Vagina (tissue), 2 donors: ENCODE measurements at regions of chr10 and their contacts with region 1.

Region 1: GRCh38 chr10:77173615-77174461 is 463.8 kb downstream of the KCNMA1 start:
- DNase-seq: no peak
- H3K4me3 ChIP-seq: no peak overlapping the region
- H3K27ac ChIP-seq: no peak overlapping the region
- H3K4me1 ChIP-seq: peaks cover 10% of the 10 kb centered on the region
- H3K27me3 ChIP-seq: no peaks in the 10 kb centered on the region
- CTCF ChIP-seq: peak; percentile 83 to 95 (median 91)
- POLR2A ChIP-seq: no peak

Region 2: DNA sequence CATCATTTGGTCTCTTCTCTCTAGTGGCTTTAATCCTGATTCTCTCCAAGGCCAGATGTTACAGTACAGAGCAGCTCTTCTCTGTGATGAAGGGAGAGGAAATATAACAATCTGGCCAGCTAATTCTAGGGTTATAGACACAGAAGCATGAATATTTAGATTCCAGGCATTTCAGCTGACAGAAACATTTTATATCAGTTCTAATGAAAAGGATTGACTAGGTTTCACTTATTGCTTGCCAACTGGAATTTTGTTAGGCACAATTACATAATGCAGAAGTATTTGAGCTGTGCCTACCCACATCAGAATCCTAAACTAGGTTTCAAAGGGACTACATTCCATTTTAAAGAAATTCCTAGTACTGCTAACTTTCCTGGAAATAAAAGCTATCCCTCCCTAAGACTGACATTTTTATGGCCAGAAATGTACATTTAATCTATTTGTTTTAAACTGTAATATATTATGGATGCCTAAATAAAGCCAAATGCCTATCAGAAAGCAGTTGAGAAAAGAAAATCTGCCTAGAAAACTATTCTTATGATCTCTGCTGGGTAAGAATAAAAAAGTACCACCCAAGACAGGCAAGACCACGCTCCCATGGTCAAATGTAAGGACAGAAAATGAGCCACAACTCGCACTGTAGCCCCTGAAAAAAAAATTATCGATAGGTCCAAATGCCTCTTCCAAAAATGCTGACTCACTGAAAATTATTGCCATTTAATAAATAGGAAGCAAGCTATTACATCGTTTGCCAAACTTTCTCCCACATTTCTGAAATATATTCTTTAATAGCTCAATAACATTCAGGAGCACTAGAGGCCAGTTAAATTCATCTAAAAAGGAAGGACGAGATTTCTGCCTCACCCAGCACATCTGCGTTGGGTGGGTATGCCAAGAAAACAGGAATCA is 34.3 kb before region 1 on chr10:
- intact Hi-C with region 1: no loop called
- DNase-seq: no peak
- H3K4me3 ChIP-seq: no peak overlapping the region
- H3K27ac ChIP-seq: no peak overlapping the region
- H3K4me1 ChIP-seq: no peaks in the 10 kb centered on the region
- H3K27me3 ChIP-seq: no peaks in the 10 kb centered on the region
- CTCF ChIP-seq: no peak
- POLR2A ChIP-seq: no peak

Region 3: DNA sequence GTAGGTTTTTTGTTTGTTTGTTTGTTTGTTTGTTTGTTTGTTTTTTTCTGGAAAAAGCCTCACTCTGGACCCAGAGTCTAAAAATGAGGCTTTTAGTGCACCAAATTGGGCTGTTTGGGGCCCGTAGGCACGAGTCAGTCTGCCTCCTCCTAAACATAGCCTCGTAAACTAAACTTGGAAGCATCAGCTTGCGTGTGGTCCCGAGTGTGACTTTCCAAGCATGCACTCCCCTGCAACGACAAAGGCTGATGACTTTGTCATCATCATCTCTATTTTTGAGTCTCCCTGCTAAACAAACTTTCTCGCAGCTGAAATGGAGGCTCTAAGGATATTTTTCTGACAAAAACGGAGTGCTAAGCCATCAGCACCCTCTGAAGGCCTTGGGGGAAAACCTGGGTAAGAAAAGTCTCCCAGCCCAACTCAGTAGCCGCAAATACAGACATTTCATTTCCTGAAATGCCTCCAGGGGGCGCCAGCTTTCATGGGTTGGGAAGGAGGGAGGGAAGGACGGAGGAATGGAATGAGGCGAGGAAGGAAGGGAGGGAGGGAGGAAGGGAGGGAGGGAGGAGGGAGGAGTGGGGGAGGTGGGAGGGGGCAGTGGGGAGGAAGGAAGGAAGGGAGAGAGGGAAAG is 217.9 kb after region 1 on chr10:
- intact Hi-C with region 1: loop called (anchors 10 kb)
- DNase-seq: no peak
- H3K4me3 ChIP-seq: no peak overlapping the region
- H3K27ac ChIP-seq: peak overlapping the region; percentile 71
- H3K4me1 ChIP-seq: peaks cover 42% of the 10 kb centered on the region
- H3K27me3 ChIP-seq: no peaks in the 10 kb centered on the region
- CTCF ChIP-seq: peak; percentile 26 to 54 (median 34)
- POLR2A ChIP-seq: no peak